ENCODE measurements at regions of chr3 and their contacts with region 1.

Region 1: GRCh38 chr3:81581966-81582599 is 179.4 kb downstream of the GBE1 start:
- DNase-seq: peak in 3 of 4 experiments; percentile 2 to 34 (median 4)
- ATAC-seq: peak; percentile 75
- H3K4me3 ChIP-seq: no peak overlapping the region
- H3K27ac ChIP-seq: no peak overlapping the region
- H3K4me1 ChIP-seq: no peaks in the 10 kb centered on the region
- H3K27me3 ChIP-seq: no peaks in the 10 kb centered on the region
- CTCF ChIP-seq: peak; percentile 41 to 53 (median 47); a peak in 5 of 6 replicates
- EP300 ChIP-seq: no peak
- POLR2A ChIP-seq: no peak
- RAD21 ChIP-seq: peak; percentile 38 to 63

Region 2: DNA sequence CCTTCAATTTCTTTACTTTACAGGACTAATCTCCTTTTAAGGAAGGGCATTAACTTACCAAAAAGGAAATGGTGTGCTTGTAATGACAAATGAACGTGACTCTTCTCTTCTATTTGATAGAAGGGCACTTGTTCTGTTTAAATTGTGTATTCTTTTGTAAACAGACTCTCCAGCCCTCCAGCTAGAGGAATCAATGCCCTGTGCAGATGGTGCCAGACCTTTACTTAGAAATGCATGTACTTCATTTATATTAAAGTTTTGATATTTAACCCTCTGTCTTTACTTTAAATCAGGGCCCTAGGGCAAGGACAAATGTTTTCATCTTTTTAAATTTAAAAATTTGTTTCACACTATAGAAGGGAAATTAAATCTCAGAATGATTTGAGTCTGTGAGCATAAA is 175.8 kb before region 1 on chr3:
- CTCF ChIA-PET with region 1: no interaction called
- POLR2A ChIA-PET with region 1: no interaction called
- in situ Hi-C with region 1: no loop called
- intact Hi-C with region 1: no loop called
- DNase-seq: no peak
- ATAC-seq: no peak
- H3K4me3 ChIP-seq: no peak overlapping the region
- H3K27ac ChIP-seq: no peak overlapping the region
- H3K4me1 ChIP-seq: no peaks in the 10 kb centered on the region
- H3K27me3 ChIP-seq: no peaks in the 10 kb centered on the region
- CTCF ChIP-seq: no peak
- EP300 ChIP-seq: no peak
- POLR2A ChIP-seq: no peak
- RAD21 ChIP-seq: no peak

Region 3: DNA sequence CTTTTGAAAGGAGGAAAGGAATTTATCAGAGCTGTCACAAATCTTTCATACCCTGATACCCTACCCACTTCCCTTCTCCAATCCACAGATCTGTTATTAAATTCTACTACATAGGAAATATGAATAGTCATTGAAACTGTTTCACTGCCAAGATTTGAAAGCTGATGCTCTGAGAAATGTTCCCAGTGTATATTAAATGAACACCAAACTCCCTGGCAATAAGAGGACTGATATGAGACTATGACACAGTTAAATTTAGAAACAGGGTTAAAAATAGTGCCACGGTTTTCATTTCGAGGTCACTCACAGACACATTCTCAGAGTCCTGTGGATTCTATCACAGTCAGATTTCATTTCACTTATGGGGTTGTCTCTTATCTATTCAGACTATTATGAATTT is 206.5 kb after region 1 on chr3:
- CTCF ChIA-PET with region 1: no interaction called
- POLR2A ChIA-PET with region 1: no interaction called
- in situ Hi-C with region 1: no loop called
- intact Hi-C with region 1: loop called (anchors 10 kb)
- DNase-seq: no peak
- ATAC-seq: no peak
- H3K4me3 ChIP-seq: no peak overlapping the region
- H3K27ac ChIP-seq: no peak overlapping the region
- H3K4me1 ChIP-seq: no peaks in the 10 kb centered on the region
- H3K27me3 ChIP-seq: no peaks in the 10 kb centered on the region
- CTCF ChIP-seq: no peak
- EP300 ChIP-seq: no peak
- POLR2A ChIP-seq: no peak
- RAD21 ChIP-seq: no peak